ENCODE measurements at regions of chr13 and their contacts with region 1.

Region 1: GRCh38 chr13:97212601-97213040 is 9.5 kb upstream of the MBNL2 start:
- DNase-seq: peak; percentile 36
- H3K4me3 ChIP-seq: no peak overlapping the region
- H3K27ac ChIP-seq: no peak overlapping the region
- H3K4me1 ChIP-seq: no peaks in the 10 kb centered on the region
- H3K27me3 ChIP-seq: no peaks in the 10 kb centered on the region
- CTCF ChIP-seq: peak; percentile 43 to 57 (median 49)
- EP300 ChIP-seq: no peak
- POLR2A ChIP-seq: no peak

Region 2: DNA sequence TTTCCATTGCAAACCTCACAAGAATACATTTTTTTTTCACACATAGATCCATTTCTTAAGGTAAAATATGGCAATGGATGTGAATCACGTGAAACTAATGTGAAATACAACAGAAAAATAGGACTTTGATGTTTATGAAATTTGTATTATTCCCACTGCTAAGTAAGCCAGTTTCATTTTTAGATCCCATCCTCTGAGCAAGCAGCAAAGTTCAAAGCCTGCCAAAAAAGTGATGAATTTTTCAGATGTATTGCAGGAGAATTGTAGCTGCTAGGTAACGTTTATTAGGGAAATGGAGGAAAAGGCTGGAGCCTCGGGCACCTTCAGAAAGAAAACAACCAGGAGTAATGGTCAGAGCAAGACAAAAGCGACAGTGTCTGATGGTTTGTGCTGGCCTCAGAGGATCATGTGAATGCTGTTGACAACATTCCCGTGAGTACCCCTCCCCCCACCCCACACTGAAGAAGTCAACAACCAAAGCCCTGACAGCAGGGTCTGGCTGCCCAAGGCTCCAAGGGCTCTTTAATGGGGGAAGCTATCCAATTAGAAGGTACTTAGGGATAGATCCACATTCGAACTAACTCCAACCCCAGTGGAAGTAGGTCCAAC is 313.9 kb before region 1 on chr13:
- in situ Hi-C with region 1: no loop called
- intact Hi-C with region 1: no loop called
- DNase-seq: no peak
- H3K4me3 ChIP-seq: no peak overlapping the region
- H3K27ac ChIP-seq: no peak overlapping the region
- H3K4me1 ChIP-seq: no peaks in the 10 kb centered on the region
- H3K27me3 ChIP-seq: no peaks in the 10 kb centered on the region
- CTCF ChIP-seq: no peak
- EP300 ChIP-seq: no peak
- POLR2A ChIP-seq: no peak

Region 3: DNA sequence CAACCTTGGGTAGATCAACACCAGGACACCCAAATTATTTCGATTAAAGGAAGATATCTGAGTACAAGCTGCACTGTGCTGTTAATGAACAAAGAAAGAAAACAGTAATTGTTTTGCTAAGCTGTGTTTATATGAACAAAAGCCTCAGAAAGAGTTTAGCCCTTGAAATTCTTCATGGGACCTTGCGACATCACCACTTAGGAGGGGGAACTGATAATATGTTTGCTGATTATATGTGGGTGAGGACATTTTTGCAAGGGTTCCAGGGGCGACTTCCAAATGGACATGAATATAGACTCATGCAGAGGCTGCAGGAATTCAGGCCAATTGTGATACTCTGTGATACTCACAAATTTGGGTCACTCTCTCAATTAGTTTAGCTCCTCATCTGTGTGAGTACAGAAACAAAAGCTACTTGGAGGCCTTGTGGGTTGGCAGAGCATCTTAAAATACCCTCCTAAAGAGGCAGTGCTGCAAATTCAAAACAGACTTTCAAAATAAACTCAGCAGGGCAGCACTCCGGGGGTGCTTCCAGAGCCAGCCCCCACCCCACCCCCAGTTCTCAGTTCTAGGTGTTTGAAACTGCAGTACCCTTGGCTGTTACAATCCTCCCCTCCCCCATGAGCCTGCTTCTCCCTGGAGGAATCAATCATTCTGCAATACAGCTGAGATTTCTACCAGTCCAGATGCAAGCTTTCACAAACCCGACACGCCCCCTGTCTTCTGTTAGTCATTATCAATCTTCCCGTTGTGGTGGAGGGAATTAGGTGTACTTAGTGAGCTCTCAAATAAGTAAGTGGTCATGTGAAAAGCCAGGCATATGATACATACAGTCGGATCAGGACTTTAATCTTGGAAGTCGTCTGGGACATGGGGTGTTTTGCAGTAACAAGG is 87.5 kb before region 1 on chr13:
- in situ Hi-C with region 1: loop called in 3 of 4 experiments (anchors 5 to 25 kb)
- intact Hi-C with region 1: no loop called
- DNase-seq: no peak
- H3K4me3 ChIP-seq: no peak overlapping the region
- H3K27ac ChIP-seq: peak overlapping the region; percentile 32 to 63 (median 38)
- H3K4me1 ChIP-seq: peaks cover 0 to 28% (median 11%) of the 10 kb centered on the region in 4 donors
- H3K27me3 ChIP-seq: no peaks in the 10 kb centered on the region
- CTCF ChIP-seq: no peak
- EP300 ChIP-seq: no peak
- POLR2A ChIP-seq: no peak